ENCODE measurements at regions of chr19 and their contacts with region 1.

Region 1: GRCh38 chr19:3429581-3430080 is 50.7 kb downstream of the SMIM24 start:
- DNase-seq: peak; percentile 69 to 80 (median 72)
- H3K4me3 ChIP-seq: no peak overlapping the region
- H3K4me3 Mint-ChIP-seq: no peak overlapping the region
- H3K27ac ChIP-seq: no peak overlapping the region
- H3K27ac Mint-ChIP-seq: peak overlapping the region in 1 of 7 donors; percentile 65
- H3K4me1 ChIP-seq: peaks cover 6% of the 10 kb centered on the region
- H3K4me1 Mint-ChIP-seq: peaks cover 4 to 8% (median 6%) of the 10 kb centered on the region in 4 donors
- H3K27me3 ChIP-seq: no peaks in the 10 kb centered on the region
- H3K27me3 Mint-ChIP-seq: no peaks in the 10 kb centered on the region

Region 2: GRCh38 chr19:3282155-3282554 is 147.5 kb before region 1 on chr19:
- CTCF ChIA-PET with region 1: no interaction called
- POLR2A ChIA-PET with region 1: no interaction called
- intact Hi-C with region 1: no loop called
- DNase-seq: no peak
- H3K4me3 ChIP-seq: no peak overlapping the region
- H3K4me3 Mint-ChIP-seq: no peak overlapping the region
- H3K27ac ChIP-seq: no peak overlapping the region
- H3K27ac Mint-ChIP-seq: peak overlapping the region in 2 of 7 donors; percentile 13 to 47
- H3K4me1 ChIP-seq: peaks cover 19% of the 10 kb centered on the region
- H3K4me1 Mint-ChIP-seq: peaks cover 5 to 13% (median 12%) of the 10 kb centered on the region in 4 donors
- H3K27me3 ChIP-seq: no peaks in the 10 kb centered on the region
- H3K27me3 Mint-ChIP-seq: peaks cover 1 to 9% of the 10 kb centered on the region in 2 donors

Region 3: DNA sequence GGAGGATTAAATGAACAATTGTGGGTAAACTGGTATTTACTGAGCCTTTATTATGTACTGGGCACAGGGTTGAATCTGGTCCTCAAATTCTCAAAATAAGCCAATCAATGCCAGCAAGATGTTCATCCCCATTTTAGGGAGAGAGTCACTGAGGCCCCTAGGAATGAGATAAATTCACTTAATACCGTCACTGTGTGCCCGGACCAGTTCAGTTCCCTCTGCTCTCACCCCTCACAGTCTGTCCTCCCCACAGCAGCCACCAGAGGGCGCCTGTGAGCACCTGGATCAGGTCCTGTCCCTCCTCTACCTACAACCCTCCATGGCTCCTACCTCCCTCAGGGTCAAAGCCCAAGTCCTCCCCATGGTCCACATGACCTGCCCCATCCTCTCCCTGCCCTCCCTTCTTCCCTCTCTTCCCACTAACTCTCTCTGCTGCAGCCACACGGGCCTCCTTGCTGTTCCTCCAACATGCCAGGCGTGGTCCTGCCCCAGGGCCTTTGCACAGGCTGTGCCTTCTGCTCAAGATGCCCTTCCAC is 105.2 kb before region 1 on chr19:
- CTCF ChIA-PET with region 1: interaction called, 150 read pairs
- POLR2A ChIA-PET with region 1: interaction called, 11 read pairs
- intact Hi-C with region 1: loop called (anchors 1 kb)
- DNase-seq: peak; percentile 50 to 66 (median 60)
- H3K4me3 ChIP-seq: no peak overlapping the region
- H3K4me3 Mint-ChIP-seq: no peak overlapping the region
- H3K27ac ChIP-seq: no peak overlapping the region
- H3K27ac Mint-ChIP-seq: peak overlapping the region in 1 of 7 donors; percentile 63
- H3K4me1 ChIP-seq: no peaks in the 10 kb centered on the region
- H3K4me1 Mint-ChIP-seq: peaks cover 0 to 2% (median under 1%) of the 10 kb centered on the region in 4 donors
- H3K27me3 ChIP-seq: no peaks in the 10 kb centered on the region
- H3K27me3 Mint-ChIP-seq: peaks cover 9 to 19% of the 10 kb centered on the region in 2 donors

Region 4: DNA sequence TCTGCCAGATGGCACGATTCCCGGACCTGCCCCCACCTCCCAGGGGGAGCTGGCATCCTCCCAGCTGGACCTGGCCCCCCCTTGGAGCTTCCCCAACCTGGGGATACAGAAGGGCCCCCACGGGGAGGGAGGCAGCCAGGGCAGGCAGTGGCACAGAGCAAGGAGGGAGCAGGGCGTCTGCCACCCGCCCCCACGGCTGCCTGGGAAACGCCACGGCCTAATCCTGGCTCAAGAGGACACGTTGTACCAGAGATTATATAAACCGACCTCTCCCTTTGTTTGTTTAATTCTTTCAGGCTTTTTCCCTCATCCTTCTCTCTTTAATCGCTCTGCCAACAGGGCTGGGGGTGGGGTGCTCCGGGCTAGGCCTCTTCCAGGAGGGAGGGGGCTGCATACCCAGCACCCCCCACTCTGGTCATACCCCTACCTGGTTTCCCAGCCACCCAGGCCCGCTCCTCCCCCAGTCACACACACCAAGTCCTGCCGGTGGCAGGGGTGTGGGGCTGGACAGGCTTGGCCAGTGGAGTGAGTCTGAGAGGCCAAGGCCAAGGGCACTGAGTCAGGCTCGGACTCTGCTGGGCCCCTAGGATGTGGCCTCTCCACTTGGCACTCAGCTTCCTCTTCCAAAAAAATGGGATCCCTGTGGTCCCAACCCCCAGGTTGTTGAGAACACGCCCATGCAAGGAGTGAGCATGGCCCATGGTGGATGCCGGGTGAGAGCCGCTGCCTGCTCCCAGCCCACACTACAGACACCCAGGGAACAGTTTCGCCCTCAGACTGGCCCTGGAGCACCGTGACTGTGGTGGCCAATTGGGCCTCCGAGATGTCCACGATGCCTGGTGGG is 92.7 kb before region 1 on chr19:
- CTCF ChIA-PET with region 1: interaction called, 21 read pairs
- POLR2A ChIA-PET with region 1: interaction called, 11 read pairs
- intact Hi-C with region 1: no loop called
- DNase-seq: no peak
- H3K4me3 ChIP-seq: no peak overlapping the region
- H3K4me3 Mint-ChIP-seq: no peak overlapping the region
- H3K27ac ChIP-seq: no peak overlapping the region
- H3K27ac Mint-ChIP-seq: no peak overlapping the region
- H3K4me1 ChIP-seq: peaks cover 10% of the 10 kb centered on the region
- H3K4me1 Mint-ChIP-seq: peaks cover 4 to 21% (median 10%) of the 10 kb centered on the region in 4 donors
- H3K27me3 ChIP-seq: no peaks in the 10 kb centered on the region
- H3K27me3 Mint-ChIP-seq: no peaks in the 10 kb centered on the region

Region 5: DNA sequence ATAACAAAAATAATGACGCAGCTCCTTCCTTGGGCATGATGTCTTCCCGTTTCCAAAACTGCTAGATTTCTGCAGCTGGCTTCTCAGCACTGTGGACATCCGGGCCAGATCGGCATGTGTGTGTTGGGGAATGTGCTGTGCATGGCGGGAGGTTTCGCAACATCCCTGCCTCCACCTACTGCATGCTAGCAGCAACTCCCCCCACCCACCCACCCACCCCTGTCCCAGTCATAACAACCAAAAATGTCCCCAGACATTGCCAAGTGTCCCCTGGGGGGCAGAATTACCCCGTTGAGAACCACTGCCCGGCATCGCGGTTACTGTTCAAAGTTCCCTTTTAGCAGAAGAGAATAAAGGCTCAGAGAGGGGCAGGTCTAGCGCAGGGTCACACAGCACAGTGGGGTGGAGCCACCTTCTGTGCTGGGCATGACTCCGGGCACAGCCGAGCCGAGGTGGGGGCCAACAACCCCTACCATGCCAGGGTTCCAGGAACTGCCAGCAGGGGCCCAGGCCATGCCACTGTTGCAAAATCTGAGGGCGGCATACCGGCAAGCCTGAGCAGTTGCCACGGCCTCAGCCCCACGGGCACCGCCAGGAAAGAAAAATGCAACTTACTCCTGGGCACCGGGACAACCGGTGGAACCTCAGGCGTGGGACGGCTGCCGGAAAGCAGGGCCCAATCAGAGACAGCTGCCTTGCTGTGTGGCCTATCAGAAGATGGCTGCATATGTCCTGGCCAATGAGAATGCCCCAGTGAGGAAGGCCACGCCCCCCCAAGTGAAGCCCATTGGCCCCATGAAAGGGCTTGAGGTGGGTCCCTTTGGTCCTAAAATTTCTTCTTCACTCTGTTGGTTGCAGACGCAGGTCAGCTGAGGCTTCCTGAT is 85.8 kb before region 1 on chr19:
- CTCF ChIA-PET with region 1: interaction called, 21 read pairs
- POLR2A ChIA-PET with region 1: interaction called, 3 read pairs
- intact Hi-C with region 1: no loop called
- DNase-seq: peak in 4 of 5 donors; percentile 26 to 50 (median 40)
- H3K4me3 ChIP-seq: no peak overlapping the region
- H3K4me3 Mint-ChIP-seq: peak overlapping the region in 6 of 8 donors; percentile 27 to 74 (median 62)
- H3K27ac ChIP-seq: no peak overlapping the region
- H3K27ac Mint-ChIP-seq: peak overlapping the region in 2 of 7 donors; percentile 48 to 53
- H3K4me1 ChIP-seq: peaks cover 3% of the 10 kb centered on the region
- H3K4me1 Mint-ChIP-seq: peaks cover 1 to 10% (median 2%) of the 10 kb centered on the region in 4 donors
- H3K27me3 ChIP-seq: no peaks in the 10 kb centered on the region
- H3K27me3 Mint-ChIP-seq: no peaks in the 10 kb centered on the region

Region 6: GRCh38 chr19:3441089-3441985 is 11.7 kb after region 1 on chr19:
- CTCF ChIA-PET with region 1: interaction called, 20 read pairs
- POLR2A ChIA-PET with region 1: no interaction called
- intact Hi-C with region 1: no loop called
- DNase-seq: no peak
- H3K4me3 ChIP-seq: no peak overlapping the region
- H3K4me3 Mint-ChIP-seq: no peak overlapping the region
- H3K27ac ChIP-seq: no peak overlapping the region
- H3K27ac Mint-ChIP-seq: no peak overlapping the region
- H3K4me1 ChIP-seq: no peaks in the 10 kb centered on the region
- H3K4me1 Mint-ChIP-seq: peaks cover 0 to 8% (median 4%) of the 10 kb centered on the region in 4 donors
- H3K27me3 ChIP-seq: no peaks in the 10 kb centered on the region
- H3K27me3 Mint-ChIP-seq: no peaks in the 10 kb centered on the region

Region 7: DNA sequence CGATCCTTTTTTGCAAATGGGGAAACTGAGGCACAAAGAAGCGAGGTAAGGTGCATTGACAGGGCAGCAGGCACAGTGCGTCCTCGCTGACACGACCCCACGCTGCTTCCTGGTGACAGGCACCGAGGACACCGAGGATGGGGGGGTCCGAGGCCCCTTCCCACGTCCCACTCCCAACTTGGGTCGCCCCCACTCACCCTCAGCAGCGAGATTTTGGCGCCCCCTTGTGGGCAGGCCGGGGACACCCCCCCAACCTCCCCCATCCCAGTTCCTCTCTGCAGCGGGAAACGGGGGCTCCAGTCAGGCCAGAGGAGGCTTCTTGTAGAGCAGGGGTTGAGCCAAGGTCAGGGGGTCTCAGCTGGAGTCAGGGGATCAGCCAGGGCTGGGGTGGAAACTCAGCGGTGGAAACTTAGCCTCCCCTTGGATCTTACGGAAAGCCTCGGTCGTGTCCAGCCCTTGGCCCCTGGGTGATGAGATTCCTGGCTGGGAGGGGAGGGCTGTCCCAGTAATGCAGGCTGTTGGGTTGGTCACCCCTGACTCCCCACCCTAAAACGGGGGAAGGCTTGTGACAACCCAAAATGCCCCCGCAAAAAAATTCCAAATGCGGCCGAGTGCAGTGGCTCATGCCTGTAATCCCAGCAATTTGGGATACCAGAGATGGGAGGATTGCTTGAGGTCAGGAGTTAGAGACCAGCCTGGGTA is 42.5 kb after region 1 on chr19:
- CTCF ChIA-PET with region 1: interaction called, 14 read pairs
- POLR2A ChIA-PET with region 1: no interaction called
- intact Hi-C with region 1: no loop called
- DNase-seq: peak in 2 of 5 donors; percentile 14 to 25
- H3K4me3 ChIP-seq: no peak overlapping the region
- H3K4me3 Mint-ChIP-seq: no peak overlapping the region
- H3K27ac ChIP-seq: no peak overlapping the region
- H3K27ac Mint-ChIP-seq: peak overlapping the region in 1 of 7 donors; percentile 24
- H3K4me1 ChIP-seq: no peaks in the 10 kb centered on the region
- H3K4me1 Mint-ChIP-seq: peaks cover 0 to 3% (median under 1%) of the 10 kb centered on the region in 4 donors
- H3K27me3 ChIP-seq: no peaks in the 10 kb centered on the region
- H3K27me3 Mint-ChIP-seq: peaks cover 0 to 1% of the 10 kb centered on the region in 2 donors

Measured in CD4-positive, alpha-beta memory T cell (primary cell).